Activated CD4-positive, alpha-beta T cell treated with anti-CD3 and anti-CD28 coated beads, Interleukin-2, amount 10 ng/mL, durations not matched to agents 24 days and 14 days (primary cell): ENCODE measurements at regions of chr3 and their contacts with region 1.

Region 1: GRCh38 chr3:30347679-30348216 is 258.7 kb upstream of the TGFBR2 start:
- DNase-seq: peak; percentile 85
- H3K4me3 Mint-ChIP-seq: peak overlapping the region; percentile 53
- H3K27ac Mint-ChIP-seq: peak overlapping the region; percentile 82
- H3K4me1 Mint-ChIP-seq: peaks cover 63% of the 10 kb centered on the region
- H3K27me3 Mint-ChIP-seq: peaks cover 8% of the 10 kb centered on the region

Region 2: DNA sequence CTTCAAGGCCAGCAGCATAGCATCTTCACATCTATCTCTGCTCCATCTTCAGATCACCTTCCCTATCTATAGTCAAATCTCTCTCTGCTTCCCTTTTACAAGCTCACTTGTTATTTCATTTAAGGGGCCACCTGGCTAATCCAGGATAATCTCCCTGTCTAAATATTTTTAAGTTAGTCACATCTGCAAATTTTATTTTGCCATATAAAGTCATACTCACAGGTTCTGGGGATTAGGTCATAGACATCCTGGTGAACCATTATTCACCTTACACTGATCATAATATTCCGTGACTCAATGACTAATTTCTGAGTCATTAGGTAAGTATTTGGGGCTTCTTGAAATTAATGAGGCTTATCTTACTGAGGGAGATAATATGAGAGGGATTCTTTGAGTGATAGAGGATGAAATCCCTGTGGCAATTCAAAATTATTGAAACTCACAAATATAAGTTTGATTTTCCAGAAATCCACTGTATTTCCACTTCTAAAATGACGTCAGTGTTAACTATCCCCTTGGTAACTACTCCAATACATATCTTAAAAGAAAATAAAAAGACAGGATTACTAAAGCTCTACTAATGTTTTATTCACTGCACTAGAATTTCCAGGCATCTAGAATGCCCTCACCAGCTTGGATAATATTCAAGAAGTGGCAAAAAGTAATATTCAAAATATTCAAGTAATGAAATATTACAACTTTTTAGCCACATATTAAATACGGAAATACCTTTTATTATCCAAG is 1160.6 kb before region 1 on chr3:
- intact Hi-C with region 1: loop called (anchors 10 kb)
- DNase-seq: no peak
- H3K4me3 Mint-ChIP-seq: no peak overlapping the region
- H3K27ac Mint-ChIP-seq: peak overlapping the region; percentile 73
- H3K4me1 Mint-ChIP-seq: peaks cover 20% of the 10 kb centered on the region
- H3K27me3 Mint-ChIP-seq: no peaks in the 10 kb centered on the region

Region 3: GRCh38 chr3:30073622-30074021 is 274.1 kb before region 1 on chr3:
- intact Hi-C with region 1: no loop called
- DNase-seq: no peak
- H3K4me3 Mint-ChIP-seq: no peak overlapping the region
- H3K27ac Mint-ChIP-seq: no peak overlapping the region
- H3K4me1 Mint-ChIP-seq: peaks cover 2% of the 10 kb centered on the region
- H3K27me3 Mint-ChIP-seq: no peaks in the 10 kb centered on the region

Region 4: DNA sequence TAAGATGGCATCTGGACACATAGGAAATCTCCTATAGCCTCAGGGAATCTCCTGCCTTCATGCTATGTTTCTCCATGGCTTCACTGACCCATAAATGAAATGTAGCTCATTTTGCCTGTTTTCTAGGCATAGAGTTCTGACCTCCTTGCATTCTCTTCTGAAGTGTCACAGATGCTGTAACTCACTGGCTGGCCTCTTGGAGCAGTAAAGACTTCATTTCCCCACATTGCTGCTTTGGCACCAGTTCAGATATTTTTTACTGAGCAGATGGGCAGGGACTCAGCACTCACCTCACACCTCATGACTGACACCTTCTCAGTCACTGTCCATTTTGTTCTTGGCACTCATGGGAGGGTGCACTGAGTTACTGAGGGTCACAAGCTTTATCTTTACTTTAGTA is 28.0 kb before region 1 on chr3:
- intact Hi-C with region 1: loop called (anchors 2 kb)
- DNase-seq: peak; percentile 72
- H3K4me3 Mint-ChIP-seq: no peak overlapping the region
- H3K27ac Mint-ChIP-seq: no peak overlapping the region
- H3K4me1 Mint-ChIP-seq: peaks cover 3% of the 10 kb centered on the region
- H3K27me3 Mint-ChIP-seq: no peaks in the 10 kb centered on the region

Region 5: DNA sequence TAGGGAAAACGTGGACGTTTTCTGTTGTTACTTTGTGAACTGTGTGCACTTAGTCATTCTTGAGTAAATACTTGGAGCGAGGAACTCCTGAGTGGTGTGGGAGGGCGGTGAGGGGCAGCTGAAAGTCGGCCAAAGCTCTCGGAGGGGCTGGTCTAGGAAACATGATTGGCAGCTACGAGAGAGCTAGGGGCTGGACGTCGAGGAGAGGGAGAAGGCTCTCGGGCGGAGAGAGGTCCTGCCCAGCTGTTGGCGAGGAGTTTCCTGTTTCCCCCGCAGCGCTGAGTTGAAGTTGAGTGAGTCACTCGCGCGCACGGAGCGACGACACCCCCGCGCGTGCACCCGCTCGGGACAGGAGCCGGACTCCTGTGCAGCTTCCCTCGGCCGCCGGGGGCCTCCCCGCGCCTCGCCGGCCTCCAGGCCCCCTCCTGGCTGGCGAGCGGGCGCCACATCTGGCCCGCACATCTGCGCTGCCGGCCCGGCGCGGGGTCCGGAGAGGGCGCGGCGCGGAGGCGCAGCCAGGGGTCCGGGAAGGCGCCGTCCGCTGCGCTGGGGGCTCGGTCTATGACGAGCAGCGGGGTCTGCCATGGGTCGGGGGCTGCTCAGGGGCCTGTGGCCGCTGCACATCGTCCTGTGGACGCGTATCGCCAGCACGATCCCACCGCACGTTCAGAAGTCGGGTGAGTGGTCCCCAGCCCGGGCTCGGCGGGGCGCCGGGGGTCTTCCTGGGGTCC is 258.7 kb after region 1 on chr3 and contains the start of gene TGFBR2:
- intact Hi-C with region 1: loop called (anchors 5 kb)
- DNase-seq: peak; percentile 95
- H3K4me3 Mint-ChIP-seq: peak within 1 kb of the TSS; percentile 90
- H3K27ac Mint-ChIP-seq: peak within 1 kb of the TSS; percentile 96
- H3K4me1 Mint-ChIP-seq: peaks cover 57% of the 10 kb centered on the region
- H3K27me3 Mint-ChIP-seq: no peaks in the 10 kb centered on the region
- total RNA-seq, gene TGFBR2: 45.3 and 47.6 TPM in 2 replicates

Region 6: GRCh38 chr3:30658328-30659052 is 310.7 kb after region 1 on chr3:
- intact Hi-C with region 1: loop called (anchors 5 kb)
- DNase-seq: peak; percentile 85
- H3K4me3 Mint-ChIP-seq: peak overlapping the region; percentile 84
- H3K27ac Mint-ChIP-seq: peak overlapping the region; percentile 97
- H3K4me1 Mint-ChIP-seq: peaks cover 85% of the 10 kb centered on the region
- H3K27me3 Mint-ChIP-seq: no peaks in the 10 kb centered on the region

Region 7: DNA sequence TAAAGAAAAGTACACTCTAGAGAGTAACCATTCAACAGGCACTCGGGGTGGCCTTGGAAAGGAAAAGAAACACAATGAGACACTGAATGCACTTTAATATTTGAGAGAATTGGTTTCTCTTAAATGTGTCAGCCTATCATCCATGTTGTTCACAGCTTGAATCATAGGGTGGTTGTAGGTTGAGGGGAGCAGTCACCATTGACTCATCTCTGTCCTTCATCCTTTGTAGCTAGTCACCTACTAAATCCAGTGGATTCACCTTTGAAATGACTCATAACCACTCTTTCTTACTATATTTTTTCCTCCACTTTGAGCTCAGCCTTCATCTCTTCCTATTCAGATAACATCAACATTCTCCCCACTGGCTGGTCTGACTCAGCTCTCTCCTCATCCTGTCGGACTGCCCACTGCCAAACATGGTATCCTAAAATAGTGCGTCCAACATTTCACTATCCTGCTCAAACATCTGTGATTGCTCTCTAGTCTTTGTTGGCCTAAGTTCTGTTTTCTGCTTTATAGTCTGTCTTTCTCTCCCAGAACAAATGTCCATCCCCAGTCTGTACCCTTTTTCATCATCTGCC is 729.4 kb after region 1 on chr3:
- intact Hi-C with region 1: loop called (anchors 10 kb)
- DNase-seq: peak; percentile 79
- H3K4me3 Mint-ChIP-seq: peak overlapping the region; percentile 22
- H3K27ac Mint-ChIP-seq: peak overlapping the region; percentile 83
- H3K4me1 Mint-ChIP-seq: peaks cover 32% of the 10 kb centered on the region
- H3K27me3 Mint-ChIP-seq: no peaks in the 10 kb centered on the region